CD4-positive, alpha-beta memory T cell (primary cell): ENCODE measurements at regions of chr13 and their contacts with region 1.

Region 1: GRCh38 chr13:100721885-100722512 is 47.4 kb upstream of the TMTC4 start:
- DNase-seq: peak in 4 of 5 donors; percentile 31 to 43 (median 32)
- H3K4me3 ChIP-seq: no peak overlapping the region
- H3K4me3 Mint-ChIP-seq: no peak overlapping the region
- H3K27ac ChIP-seq: no peak overlapping the region
- H3K27ac Mint-ChIP-seq: no peak overlapping the region
- H3K4me1 ChIP-seq: no peaks in the 10 kb centered on the region
- H3K4me1 Mint-ChIP-seq: peaks cover 0 to 4% (median under 1%) of the 10 kb centered on the region in 4 donors
- H3K27me3 ChIP-seq: no peaks in the 10 kb centered on the region
- H3K27me3 Mint-ChIP-seq: peaks cover 4 to 15% of the 10 kb centered on the region in 2 donors

Region 2: GRCh38 chr13:100710176-100710575 is 11.8 kb before region 1 on chr13:
- CTCF ChIA-PET with region 1: interaction called, 11 read pairs
- POLR2A ChIA-PET with region 1: no interaction called
- intact Hi-C with region 1: no loop called
- DNase-seq: no peak
- H3K4me3 ChIP-seq: no peak overlapping the region
- H3K4me3 Mint-ChIP-seq: no peak overlapping the region
- H3K27ac ChIP-seq: no peak overlapping the region
- H3K27ac Mint-ChIP-seq: no peak overlapping the region
- H3K4me1 ChIP-seq: no peaks in the 10 kb centered on the region
- H3K4me1 Mint-ChIP-seq: no peaks in the 10 kb centered on the region
- H3K27me3 ChIP-seq: no peaks in the 10 kb centered on the region
- H3K27me3 Mint-ChIP-seq: no peaks in the 10 kb centered on the region

Region 3: GRCh38 chr13:100734194-100734720 is 12.3 kb after region 1 on chr13:
- CTCF ChIA-PET with region 1: interaction called, 11 read pairs
- POLR2A ChIA-PET with region 1: no interaction called
- intact Hi-C with region 1: no loop called
- DNase-seq: no peak
- H3K4me3 ChIP-seq: no peak overlapping the region
- H3K4me3 Mint-ChIP-seq: no peak overlapping the region
- H3K27ac ChIP-seq: no peak overlapping the region
- H3K27ac Mint-ChIP-seq: no peak overlapping the region
- H3K4me1 ChIP-seq: no peaks in the 10 kb centered on the region
- H3K4me1 Mint-ChIP-seq: peaks cover 0 to under 1% (median 0%) of the 10 kb centered on the region in 4 donors
- H3K27me3 ChIP-seq: no peaks in the 10 kb centered on the region
- H3K27me3 Mint-ChIP-seq: peaks cover 16 to 20% of the 10 kb centered on the region in 2 donors